ENCODE measurements at regions of chr10 and their contacts with region 1.

Region 1: DNA sequence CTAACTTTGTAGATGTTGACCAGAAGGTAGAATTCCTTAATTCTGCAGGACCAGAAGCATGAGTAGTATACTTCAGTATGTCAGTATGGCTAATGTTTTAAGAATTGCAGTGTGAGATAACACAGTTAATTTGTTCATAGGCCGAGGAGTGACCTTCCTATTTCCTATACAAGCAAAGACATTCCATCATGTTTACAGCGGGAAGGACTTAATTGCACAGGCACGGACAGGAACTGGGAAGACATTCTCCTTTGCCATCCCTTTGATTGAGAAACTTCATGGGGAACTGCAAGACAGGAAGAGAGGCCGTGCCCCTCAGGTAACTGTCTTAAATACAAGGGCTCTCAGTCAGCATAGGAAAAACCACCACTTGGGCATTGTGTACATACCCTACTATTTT is 7.2 kb downstream of the DDX21 start:
- DNase-seq: no peak
- H3K4me3 Mint-ChIP-seq: no peak overlapping the region
- H3K27ac Mint-ChIP-seq: no peak overlapping the region
- H3K4me1 Mint-ChIP-seq: peaks cover 38% of the 10 kb centered on the region
- H3K27me3 Mint-ChIP-seq: no peaks in the 10 kb centered on the region

Region 2: DNA sequence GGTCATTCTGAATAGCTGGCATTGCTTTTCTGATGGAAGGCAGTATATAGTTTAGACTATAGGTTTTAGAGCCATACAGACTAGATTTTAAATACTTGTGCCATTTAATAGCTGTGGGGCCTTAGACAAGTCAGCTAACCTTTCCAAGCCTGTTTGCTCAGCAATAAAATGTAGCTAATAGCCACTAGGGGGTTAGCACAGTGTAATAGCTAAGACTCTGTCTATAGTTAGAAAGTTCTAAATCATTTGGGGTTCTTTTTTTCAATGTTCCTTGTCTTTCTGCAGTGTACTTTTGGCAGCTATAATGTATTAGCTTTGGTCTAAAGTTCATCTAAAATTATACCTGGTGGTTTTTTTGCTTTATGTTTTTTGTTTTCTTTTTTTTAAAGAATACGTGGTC is 17.9 kb after region 1 on chr10:
- CTCF ChIA-PET with region 1: interaction called, 18 read pairs
- POLR2A ChIA-PET with region 1: no interaction called
- DNase-seq: no peak
- H3K4me3 Mint-ChIP-seq: no peak overlapping the region
- H3K27ac Mint-ChIP-seq: no peak overlapping the region
- H3K4me1 Mint-ChIP-seq: peaks cover 10% of the 10 kb centered on the region
- H3K27me3 Mint-ChIP-seq: no peaks in the 10 kb centered on the region

Region 3: GRCh38 chr10:68988530-68989316 is 25.6 kb after region 1 on chr10 and contains the start of gene KIFBP:
- CTCF ChIA-PET with region 1: interaction called, 18 read pairs
- POLR2A ChIA-PET with region 1: no interaction called
- DNase-seq: peak; percentile 91
- H3K4me3 Mint-ChIP-seq: peak within 1 kb of the TSS; percentile 96
- H3K27ac Mint-ChIP-seq: peak within 1 kb of the TSS; percentile 96
- H3K4me1 Mint-ChIP-seq: peaks cover 48% of the 10 kb centered on the region
- H3K27me3 Mint-ChIP-seq: no peaks in the 10 kb centered on the region
- total RNA-seq, gene KIFBP: 13.8 to 15.1 TPM